ENCODE measurements at regions of chr2 and their contacts with region 1.

Region 1: GRCh38 chr2:41634686-41635085 is 413.1 kb upstream of the PKDCC start:
- DNase-seq: no peak
- ATAC-seq: no peak
- H3K4me3 Mint-ChIP-seq: no peak overlapping the region
- H3K27ac Mint-ChIP-seq: no peak overlapping the region
- H3K4me1 Mint-ChIP-seq: no peaks in the 10 kb centered on the region
- H3K27me3 Mint-ChIP-seq: peaks cover 3% of the 10 kb centered on the region

Region 2: DNA sequence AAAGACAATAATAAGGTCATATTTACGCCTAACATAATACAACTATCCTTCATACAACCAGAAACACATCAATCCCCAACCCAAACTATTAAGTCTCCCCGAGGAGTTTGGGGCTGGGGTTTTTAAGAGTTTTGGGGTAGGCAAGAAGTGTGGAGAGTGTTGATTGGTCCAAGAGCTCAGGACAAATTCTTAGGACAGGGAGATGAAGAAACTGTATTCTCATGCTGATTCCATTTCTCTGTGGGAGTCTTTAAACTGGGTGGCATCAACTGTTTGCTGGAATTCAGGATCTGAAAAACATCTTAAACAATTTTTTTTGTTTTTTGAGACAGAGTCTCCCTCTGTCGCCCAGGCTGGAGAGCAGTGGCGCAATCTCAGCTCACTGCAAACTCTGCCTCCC is 908.2 kb after region 1 on chr2:
- CTCF ChIA-PET with region 1: no interaction called
- POLR2A ChIA-PET with region 1: interaction called, 12 read pairs
- intact Hi-C with region 1: no loop called
- DNase-seq: no peak
- ATAC-seq: no peak
- H3K4me3 Mint-ChIP-seq: no peak overlapping the region
- H3K27ac Mint-ChIP-seq: no peak overlapping the region
- H3K4me1 Mint-ChIP-seq: peaks cover 6% of the 10 kb centered on the region
- H3K27me3 Mint-ChIP-seq: no peaks in the 10 kb centered on the region